Colonic mucosa (tissue), 4 donors: ENCODE measurements at regions of chr11 and their contacts with region 1.

Region 1: DNA sequence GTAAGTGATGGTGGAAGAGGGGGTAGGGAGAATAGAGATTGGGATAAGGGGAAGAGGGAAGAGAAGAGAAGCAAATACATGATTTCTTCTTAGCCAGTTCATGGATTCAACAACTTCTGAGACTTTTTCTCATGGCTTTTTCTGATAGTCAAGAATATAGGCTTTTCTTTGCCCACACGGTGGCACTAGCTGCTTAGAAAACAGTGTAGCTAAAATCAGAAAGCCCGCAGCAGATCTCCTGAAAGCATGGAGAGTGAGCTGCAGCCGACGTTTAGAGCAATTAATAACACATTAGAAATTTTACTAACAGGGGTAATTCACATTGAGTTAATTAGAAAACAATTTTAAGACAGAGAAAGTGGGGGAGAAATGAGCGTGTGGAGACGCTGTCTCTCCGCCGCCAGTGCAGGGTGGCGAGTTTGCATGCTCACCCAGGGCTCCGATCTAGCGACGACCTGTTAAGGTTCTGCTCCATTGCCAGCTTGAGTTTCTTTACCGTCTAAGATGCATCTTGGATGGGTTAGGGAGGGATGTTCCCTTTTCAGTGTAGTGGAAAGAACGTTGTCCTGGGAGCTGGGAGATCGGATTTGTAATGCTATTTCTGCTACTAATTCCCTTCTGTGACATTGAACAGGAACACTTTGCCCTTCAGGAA is 3.3 kb upstream of the RAG1 start:
- DNase-seq: peak; percentile 50
- H3K4me3 ChIP-seq: peak overlapping the region; percentile 10
- H3K27ac ChIP-seq: no peak overlapping the region
- H3K4me1 ChIP-seq: no peaks in the 10 kb centered on the region
- H3K27me3 ChIP-seq: no peaks in the 10 kb centered on the region
- CTCF ChIP-seq: peak; percentile 53

Region 2: DNA sequence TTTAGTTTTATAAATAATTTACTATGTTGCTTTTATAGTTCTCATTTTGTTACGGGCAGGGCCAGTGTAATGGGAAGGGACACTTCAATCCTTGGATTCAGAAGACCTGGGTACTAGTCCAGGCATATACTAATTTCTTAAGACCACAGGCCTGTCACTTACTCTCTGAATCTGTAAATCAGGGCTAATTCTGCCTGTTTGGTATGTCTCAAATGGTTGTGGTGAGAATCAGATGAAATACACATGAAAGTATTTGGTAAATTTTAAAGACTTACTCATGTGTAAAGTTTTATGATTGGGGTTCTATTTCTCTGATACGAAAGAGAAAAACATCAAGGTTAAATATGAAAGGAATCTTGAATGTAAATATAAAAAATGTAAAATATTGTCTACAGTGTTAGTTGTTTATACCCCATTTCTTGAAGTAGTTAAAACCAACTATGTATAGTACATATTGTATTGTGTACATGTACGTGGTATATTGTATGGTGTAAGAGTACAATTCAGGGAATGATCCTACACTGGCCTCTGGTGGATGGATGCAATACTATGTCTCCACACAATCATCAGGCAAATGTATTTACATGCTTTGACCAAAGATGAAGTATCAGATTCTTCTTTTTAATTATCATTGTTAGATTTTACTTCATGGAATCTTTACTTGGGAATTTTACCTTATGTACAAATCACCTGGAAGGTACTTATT is 58.1 kb after region 1 on chr11:
- intact Hi-C with region 1: loop called (anchors 5 kb)
- DNase-seq: no peak
- H3K4me3 ChIP-seq: no peak overlapping the region
- H3K27ac ChIP-seq: no peak overlapping the region
- H3K4me1 ChIP-seq: no peaks in the 10 kb centered on the region
- H3K27me3 ChIP-seq: no peaks in the 10 kb centered on the region
- CTCF ChIP-seq: peak; percentile 39

Region 3: DNA sequence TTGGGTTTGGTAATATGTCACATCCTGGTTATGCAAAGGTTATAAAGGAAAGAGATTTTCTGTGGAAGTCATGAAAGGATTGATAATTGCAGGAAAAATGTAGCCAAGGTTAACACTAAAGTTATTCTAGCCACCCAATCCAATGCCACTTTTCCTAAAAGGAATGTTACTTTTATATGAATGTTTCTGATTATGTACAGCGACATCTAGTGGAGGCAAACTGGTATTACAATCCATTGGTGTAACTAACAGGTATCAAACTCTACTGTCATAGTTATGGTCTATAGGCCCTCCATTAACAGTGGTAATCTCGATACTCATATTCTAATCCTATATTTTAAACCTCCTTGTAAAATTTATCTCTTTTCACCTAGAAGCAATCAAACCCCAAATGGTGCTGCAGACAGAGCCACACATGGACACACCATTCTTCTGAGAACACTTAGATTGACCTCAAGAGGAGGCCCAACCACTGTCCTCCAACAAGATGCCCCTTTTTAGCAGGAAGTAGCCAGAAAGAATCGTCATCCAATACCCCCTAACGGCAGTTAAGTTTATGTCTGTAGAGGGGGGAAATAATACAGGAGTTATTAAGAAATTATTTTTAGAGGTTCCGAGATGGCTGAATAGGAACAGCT is 108.4 kb after region 1 on chr11:
- intact Hi-C with region 1: loop called (anchors 2 kb)
- DNase-seq: peak; percentile 27
- H3K4me3 ChIP-seq: no peak overlapping the region
- H3K27ac ChIP-seq: no peak overlapping the region
- H3K4me1 ChIP-seq: no peaks in the 10 kb centered on the region
- H3K27me3 ChIP-seq: no peaks in the 10 kb centered on the region
- CTCF ChIP-seq: peak; percentile 73

Region 4: DNA sequence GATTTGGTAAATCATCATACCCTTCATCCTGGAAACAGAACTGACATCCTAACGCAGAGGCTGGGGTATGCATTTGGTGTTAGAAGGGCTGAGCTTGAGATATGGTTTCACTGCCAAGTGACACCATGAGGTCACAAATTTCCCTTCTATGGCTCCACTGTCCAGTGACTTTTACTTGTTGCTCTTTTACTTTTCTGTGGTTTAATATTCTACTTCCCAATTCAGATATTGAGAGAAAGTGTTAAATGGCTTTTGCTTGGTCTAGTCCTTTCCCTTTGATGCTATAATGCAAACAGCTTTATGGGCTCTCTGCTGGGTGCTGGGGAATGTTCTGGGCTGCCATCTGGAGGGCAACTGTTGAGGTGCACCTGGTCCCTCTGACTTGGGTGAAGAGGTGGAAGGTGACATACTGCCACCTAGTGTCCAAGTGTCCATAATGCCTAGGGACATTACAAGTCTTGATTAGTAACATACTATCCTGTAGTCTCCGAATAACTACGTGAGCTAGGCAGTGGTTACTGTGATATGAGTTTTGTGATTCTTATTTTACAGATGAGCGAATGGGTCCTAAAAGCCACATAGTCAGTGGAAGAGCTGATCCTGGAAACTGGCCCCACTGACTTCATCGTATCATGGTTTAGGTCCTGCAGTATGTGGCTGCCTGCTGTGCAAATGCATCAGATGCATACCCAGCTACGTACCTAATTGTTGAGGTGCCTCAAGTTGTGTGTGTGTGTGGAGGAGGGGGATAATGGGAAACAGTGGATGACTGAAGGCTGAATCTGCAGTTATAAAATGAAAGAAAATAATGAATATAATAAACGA is 182.6 kb after region 1 on chr11:
- intact Hi-C with region 1: loop called (anchors 5 kb)
- DNase-seq: peak; percentile 93
- H3K4me3 ChIP-seq: no peak overlapping the region
- H3K27ac ChIP-seq: no peak overlapping the region
- H3K4me1 ChIP-seq: no peaks in the 10 kb centered on the region
- H3K27me3 ChIP-seq: no peaks in the 10 kb centered on the region
- CTCF ChIP-seq: peak; percentile 99